ENCODE measurements at regions of chr17 and their contacts with region 1.

Region 1: GRCh38 chr17:74659898-74660297 is 36.4 kb upstream of the CD300E start:
- DNase-seq: no peak
- ATAC-seq: no peak
- H3K4me3 ChIP-seq: no peak overlapping the region
- H3K27ac ChIP-seq: no peak overlapping the region
- H3K4me1 ChIP-seq: 0 out of 3 replicates have a peak, but pooled peaks cover 3% of the 10 kb centered on the region
- CTCF ChIP-seq: no peak
- EP300 ChIP-seq: no peak
- POLR2A ChIP-seq: no peak
- RAD21 ChIP-seq: no peak

Region 2: GRCh38 chr17:74478420-74479100 is 181.3 kb before region 1 on chr17:
- CTCF ChIA-PET with region 1: no interaction called
- POLR2A ChIA-PET with region 1: no interaction called
- DNase-seq: no peak
- ATAC-seq: no peak
- H3K4me3 ChIP-seq: no peak overlapping the region
- H3K27ac ChIP-seq: no peak overlapping the region
- H3K4me1 ChIP-seq: no peaks in the 10 kb centered on the region
- CTCF ChIP-seq: no peak
- EP300 ChIP-seq: no peak
- POLR2A ChIP-seq: no peak
- RAD21 ChIP-seq: no peak

Region 3: GRCh38 chr17:74584292-74585060 is 75.4 kb before region 1 on chr17:
- CTCF ChIA-PET with region 1: no interaction called
- POLR2A ChIA-PET with region 1: no interaction called
- DNase-seq: no peak
- ATAC-seq: no peak
- H3K4me3 ChIP-seq: no peak overlapping the region
- H3K27ac ChIP-seq: no peak overlapping the region
- H3K4me1 ChIP-seq: no peaks in the 10 kb centered on the region
- CTCF ChIP-seq: no peak
- EP300 ChIP-seq: no peak
- POLR2A ChIP-seq: no peak
- RAD21 ChIP-seq: no peak

Region 4: GRCh38 chr17:74631468-74632450 is 28.1 kb before region 1 on chr17:
- CTCF ChIA-PET with region 1: interaction called, 11 read pairs
- POLR2A ChIA-PET with region 1: no interaction called
- DNase-seq: no peak
- ATAC-seq: peak; percentile 55 to 60; a peak in 4 of 6 replicates
- H3K4me3 ChIP-seq: 0 out of 3 replicates have a peak overlapping the region, but pooled peaks have one; percentile 6
- H3K27ac ChIP-seq: peak overlapping the region in 1 of 2 experiments; percentile 17; a peak in 1 of 6 replicates
- H3K4me1 ChIP-seq: no peaks in the 10 kb centered on the region
- CTCF ChIP-seq: no peak
- EP300 ChIP-seq: no peak
- POLR2A ChIP-seq: no peak
- RAD21 ChIP-seq: no peak

Region 5: DNA sequence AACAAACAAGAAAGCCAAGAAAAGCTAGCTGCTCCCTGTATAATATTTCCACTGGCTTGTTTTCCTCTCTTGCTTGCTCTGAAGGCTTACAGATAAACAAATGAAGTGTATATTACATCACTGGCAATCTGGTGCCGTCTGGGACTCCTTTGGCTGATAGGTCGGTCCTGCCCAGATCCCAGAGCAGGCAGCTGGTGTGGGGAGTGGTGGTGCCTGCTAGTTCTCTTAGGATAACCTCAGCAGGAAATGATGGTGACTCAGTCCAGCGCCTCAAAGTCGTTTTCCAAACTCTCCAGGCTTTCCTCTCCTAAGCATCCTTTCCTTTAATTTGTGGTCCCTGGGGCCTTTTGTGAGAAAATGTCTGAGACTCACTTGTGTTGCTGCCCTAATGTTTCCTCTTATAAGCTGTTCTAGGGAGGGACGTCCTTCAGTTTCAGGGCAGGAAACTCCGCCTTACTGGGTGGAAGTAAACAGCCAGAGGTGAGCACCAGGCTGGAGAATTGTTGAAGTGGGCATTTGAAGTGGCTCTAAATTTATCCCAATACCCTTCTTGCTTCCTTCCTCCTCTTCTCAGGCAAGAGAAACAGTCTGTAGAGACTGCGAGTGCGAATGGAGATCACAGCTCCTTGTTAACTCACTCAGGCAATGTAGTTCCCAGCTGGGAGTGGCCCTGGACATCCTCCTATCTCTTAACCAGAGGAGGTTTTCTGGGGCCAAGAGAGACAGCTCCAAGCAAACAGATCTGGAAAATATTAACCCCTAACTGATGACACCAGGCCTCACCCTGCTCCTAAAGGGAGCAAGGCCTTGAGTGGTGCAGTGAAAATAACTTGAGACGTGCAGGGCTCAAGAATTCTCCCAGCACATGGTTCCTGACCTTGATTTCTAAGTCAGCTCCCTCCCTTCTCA is 17.9 kb after region 1 on chr17:
- CTCF ChIA-PET with region 1: interaction called, 26 read pairs
- POLR2A ChIA-PET with region 1: no interaction called
- DNase-seq: peak; percentile 33 to 69
- ATAC-seq: peak; percentile 75 to 83
- H3K4me3 ChIP-seq: peak overlapping the region; percentile 5; the same call in 1 of the 3 replicates
- H3K27ac ChIP-seq: peak overlapping the region; percentile 33 to 37; a peak in 3 of 6 replicates
- H3K4me1 ChIP-seq: peaks cover 16% of the 10 kb centered on the region
- CTCF ChIP-seq: no peak
- EP300 ChIP-seq: no peak
- POLR2A ChIP-seq: no peak
- RAD21 ChIP-seq: no peak

Region 6: GRCh38 chr17:74723891-74724290 is 64.0 kb after region 1 on chr17:
- CTCF ChIA-PET with region 1: interaction called, 11 read pairs
- POLR2A ChIA-PET with region 1: no interaction called
- DNase-seq: no peak
- ATAC-seq: no peak
- H3K4me3 ChIP-seq: no peak overlapping the region
- H3K27ac ChIP-seq: no peak overlapping the region
- H3K4me1 ChIP-seq: no peaks in the 10 kb centered on the region
- CTCF ChIP-seq: no peak
- EP300 ChIP-seq: no peak
- POLR2A ChIP-seq: no peak
- RAD21 ChIP-seq: no peak

Region 7: GRCh38 chr17:74748529-74749365 is 88.8 kb after region 1 on chr17 and contains the start of gene NHERF1:
- CTCF ChIA-PET with region 1: interaction called, 71 read pairs
- POLR2A ChIA-PET with region 1: interaction called, 11 read pairs
- DNase-seq: peak; percentile 59 to 90
- ATAC-seq: peak; percentile 86 to 96
- H3K4me3 ChIP-seq: peak within 1 kb of the TSS; percentile 76
- H3K27ac ChIP-seq: peak within 1 kb of the TSS; percentile 71 to 88
- H3K4me1 ChIP-seq: peaks cover 30% of the 10 kb centered on the region
- CTCF ChIP-seq: no peak; the same call in 2 of the 3 replicates
- EP300 ChIP-seq: no peak
- POLR2A ChIP-seq: peak; percentile 99
- RAD21 ChIP-seq: peak in 1 of 2 experiments; percentile 36; a peak in 1 of 5 replicates
- polyA plus RNA-seq, gene NHERF1: 50.2 and 51.5 TPM in 2 replicates

Region 8: DNA sequence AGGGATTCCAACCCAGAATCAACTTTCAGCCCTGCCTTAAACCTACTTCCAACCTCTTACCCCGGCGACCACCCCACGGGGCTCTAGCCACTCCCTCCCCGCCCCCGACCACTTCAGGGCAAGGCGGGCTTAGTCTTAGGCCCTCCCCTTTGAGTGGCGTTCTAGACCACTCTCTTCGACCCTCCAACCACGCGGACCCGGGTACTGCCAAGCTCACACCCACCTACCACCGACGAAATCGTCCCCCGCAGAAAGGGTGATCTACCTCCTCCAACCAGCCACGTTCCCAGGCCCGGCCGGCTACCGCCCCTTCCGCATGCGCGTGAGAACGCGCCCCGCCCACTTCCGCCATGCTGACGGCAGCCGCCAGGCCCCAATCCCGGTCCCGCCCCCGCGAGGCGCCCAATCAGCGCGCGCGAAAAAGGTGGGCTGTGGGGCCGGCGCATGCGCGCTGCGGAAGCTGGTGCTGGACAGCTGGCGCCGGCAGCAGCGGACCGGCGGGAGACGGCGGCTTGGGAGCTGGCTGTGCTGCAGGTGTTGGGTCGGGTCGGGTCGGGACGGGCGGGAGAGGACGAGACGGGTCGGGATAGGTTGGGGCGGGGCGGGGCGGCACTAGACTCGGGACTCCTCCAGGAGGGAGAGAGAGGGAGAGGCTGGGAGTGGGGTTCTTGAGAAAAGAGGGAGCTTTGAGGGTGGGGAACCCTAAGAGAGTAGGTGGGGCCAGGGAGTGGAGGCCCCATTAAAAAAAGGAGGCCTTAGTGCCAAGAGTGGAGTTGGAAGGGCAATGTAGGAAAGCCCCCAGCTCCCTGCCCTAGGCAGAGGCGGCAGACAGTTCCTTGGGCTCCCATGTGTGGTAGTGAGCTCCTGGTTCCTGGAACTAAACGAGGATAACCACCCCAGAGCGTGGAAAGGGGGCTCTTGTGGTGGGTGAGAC is 116.4 kb after region 1 on chr17 and contains the start of gene NAT9:
- CTCF ChIA-PET with region 1: interaction called, 65 read pairs
- POLR2A ChIA-PET with region 1: interaction called, 4 read pairs
- DNase-seq: peak; percentile 97 to 99
- ATAC-seq: peak; percentile 84 to 92
- H3K4me3 ChIP-seq: peak within 1 kb of the TSS; percentile 69
- H3K27ac ChIP-seq: peak within 1 kb of the TSS; percentile 89 to 92
- H3K4me1 ChIP-seq: peaks cover 31% of the 10 kb centered on the region
- CTCF ChIP-seq: no peak
- EP300 ChIP-seq: no peak
- POLR2A ChIP-seq: peak; percentile 91
- RAD21 ChIP-seq: no peak
- polyA plus RNA-seq, gene NAT9: 42.9 and 43.4 TPM in 2 replicates

Region 9: GRCh38 chr17:74864866-74865395 is 205.0 kb after region 1 on chr17:
- CTCF ChIA-PET with region 1: interaction called, 13 read pairs
- POLR2A ChIA-PET with region 1: no interaction called
- DNase-seq: peak; percentile 78 to 85
- ATAC-seq: peak; percentile 49 to 74
- H3K4me3 ChIP-seq: no peak overlapping the region
- H3K27ac ChIP-seq: no peak overlapping the region
- H3K4me1 ChIP-seq: peaks cover 38% of the 10 kb centered on the region
- CTCF ChIP-seq: peak; percentile 77
- EP300 ChIP-seq: no peak
- POLR2A ChIP-seq: no peak
- RAD21 ChIP-seq: peak; percentile 76 to 85

Measured in A549 (cell line).